ENCODE measurements at regions of chr15 and their contacts with region 1.

Region 1: GRCh38 chr15:54559405-54560069 is 581.3 kb downstream of the UNC13C start:
- DNase-seq: no peak

Region 2: GRCh38 chr15:54364961-54365360 is 194.6 kb before region 1 on chr15:
- intact Hi-C with region 1: no loop called
- DNase-seq: no peak

Region 3: DNA sequence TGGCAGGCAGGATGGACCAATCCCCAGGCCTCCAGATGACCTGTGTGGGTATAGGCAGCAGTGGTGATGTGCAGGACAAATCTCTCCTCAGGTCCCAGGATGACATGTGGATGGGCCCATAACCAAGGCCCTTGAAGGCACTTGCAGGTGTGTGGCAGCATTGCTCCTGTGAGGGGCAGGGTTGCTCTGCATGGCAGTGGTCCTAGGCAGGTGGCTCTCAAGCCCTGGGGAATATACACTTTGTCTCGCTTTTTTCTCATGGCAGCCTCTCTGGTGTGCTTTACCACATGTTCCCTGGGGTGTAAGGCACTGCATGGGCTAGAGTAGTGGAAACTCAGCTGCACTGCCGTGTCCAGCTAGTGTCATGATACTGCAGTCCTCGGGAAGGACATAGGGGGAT is 77.7 kb before region 1 on chr15:
- intact Hi-C with region 1: loop called in 1 of 2 experiments (anchors 2 kb)
- DNase-seq: no peak

Region 4: GRCh38 chr15:54577476-54578250 is 18.1 kb after region 1 on chr15:
- intact Hi-C with region 1: loop called in 1 of 2 experiments (anchors 1 kb)
- DNase-seq: no peak

Measured in posterior vena cava (tissue), 2 donors.